H1 (cell line): ENCODE measurements at regions of chr1 and their contacts with region 1.

Region 1: GRCh38 chr1:94025383-94026340 is 95.3 kb downstream of the ABCA4 start:
- DNase-seq: no peak
- H3K4me3 ChIP-seq: no peak overlapping the region
- H3K27ac ChIP-seq: no peak overlapping the region
- H3K4me1 ChIP-seq: peaks cover 0 to 6% (median 2%) of the 10 kb centered on the region in 4 experiments; a peak in 3 of 7 replicates
- H3K27me3 ChIP-seq: no peaks in the 10 kb centered on the region; a peak in 1 of 7 replicates
- CTCF ChIP-seq: peak in 2 of 3 experiments; percentile 51 to 59; a peak in 3 of 4 replicates
- EP300 ChIP-seq: no peak
- POLR2A ChIP-seq: no peak
- RAD21 ChIP-seq: peak; percentile 63 to 66

Region 2: DNA sequence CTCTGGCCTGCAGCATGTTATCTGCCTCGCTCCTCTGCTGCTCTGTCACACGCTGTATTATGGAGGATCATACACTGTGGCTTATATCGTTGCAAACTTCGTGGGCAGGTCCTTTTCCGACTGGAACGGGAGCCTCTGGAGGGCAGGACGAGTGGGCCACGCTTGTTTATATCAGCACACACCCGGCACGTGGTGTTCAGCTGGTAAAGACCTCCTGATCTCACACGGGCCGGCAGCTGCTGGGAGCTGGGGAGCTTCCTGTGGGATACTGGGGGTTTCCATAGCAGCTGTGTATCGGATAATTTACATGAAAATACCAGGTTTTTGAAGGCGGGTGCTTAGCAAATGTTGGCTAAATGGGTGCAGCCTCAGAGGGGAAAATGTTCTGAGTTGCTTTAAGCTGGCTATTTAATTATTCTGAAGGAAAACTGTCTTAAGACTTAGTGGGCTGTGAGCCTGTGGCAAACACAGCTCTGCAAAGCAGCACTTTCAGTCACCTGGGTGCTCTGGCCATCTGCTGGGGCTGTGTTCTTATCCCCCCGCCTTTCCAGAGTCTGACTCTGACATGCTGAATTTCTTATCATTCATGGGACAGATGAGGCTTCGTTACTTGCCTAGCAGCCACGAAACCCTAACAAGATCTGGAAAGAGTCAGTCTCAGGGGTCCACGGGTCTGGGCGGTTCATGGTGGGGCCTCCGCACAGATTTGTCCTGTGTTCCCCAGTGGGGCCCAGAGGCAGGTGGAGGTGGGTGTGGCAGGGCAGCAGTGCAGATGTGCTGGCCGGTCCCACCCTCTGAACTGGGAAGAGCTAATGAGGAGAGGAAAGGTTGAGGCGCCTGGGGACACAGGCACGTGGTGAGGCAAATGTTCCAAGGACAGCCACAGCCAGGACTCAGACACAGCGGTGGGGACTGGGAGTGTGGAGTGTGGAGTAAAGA is 12.7 kb before region 1 on chr1:
- CTCF ChIA-PET with region 1: interaction called, 47 read pairs
- POLR2A ChIA-PET with region 1: interaction called, 4 read pairs
- DNase-seq: peak in 1 of 2 experiments; percentile 62
- H3K4me3 ChIP-seq: peak overlapping the region in 1 of 4 experiments; percentile 24; a peak in 1 of 8 replicates
- H3K27ac ChIP-seq: no peak overlapping the region
- H3K4me1 ChIP-seq: peaks cover 6 to 24% (median 15%) of the 10 kb centered on the region in 4 experiments
- H3K27me3 ChIP-seq: peaks cover 0 to 28% (median 14%) of the 10 kb centered on the region in 4 experiments; a peak in 4 of 7 replicates
- CTCF ChIP-seq: no peak
- EP300 ChIP-seq: no peak
- POLR2A ChIP-seq: no peak
- RAD21 ChIP-seq: no peak

Region 3: DNA sequence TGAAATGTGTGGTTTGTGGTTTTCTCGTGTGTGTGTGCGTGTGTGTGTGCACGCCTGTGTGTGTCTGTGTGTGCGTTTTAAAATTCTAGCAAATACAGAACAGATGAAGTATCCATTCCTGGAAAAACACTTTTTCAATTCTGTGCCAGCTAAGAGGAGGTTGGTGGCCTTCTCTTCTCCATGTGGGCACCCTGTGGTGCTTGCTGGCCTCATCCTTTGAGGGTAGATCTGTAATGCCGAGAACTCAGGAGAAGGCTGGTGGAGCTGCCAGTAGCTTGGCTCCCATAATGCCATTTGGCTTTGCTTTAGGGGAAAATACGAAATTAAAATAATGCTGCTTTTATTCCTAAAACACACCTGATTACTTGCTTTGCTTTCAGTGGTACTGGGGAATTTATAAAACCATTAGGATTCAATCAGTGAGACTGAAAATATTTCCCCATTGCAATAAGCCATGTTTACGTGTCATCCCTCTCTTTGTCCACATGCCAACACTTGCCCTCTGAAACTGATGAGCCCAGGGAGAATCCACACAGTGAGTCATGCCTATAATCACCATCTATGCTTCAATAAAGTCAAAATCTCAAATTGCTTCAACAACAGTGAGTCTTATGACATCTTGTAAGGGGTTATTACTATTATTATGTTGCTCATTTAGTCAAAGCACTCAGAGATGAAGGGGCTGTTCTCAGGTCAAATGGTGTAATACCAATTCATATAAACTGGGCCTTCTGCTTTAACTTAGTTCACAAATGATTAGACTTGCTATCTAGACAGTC is 56.1 kb after region 1 on chr1:
- CTCF ChIA-PET with region 1: interaction called, 13 read pairs
- POLR2A ChIA-PET with region 1: no interaction called
- DNase-seq: no peak
- H3K4me3 ChIP-seq: no peak overlapping the region
- H3K27ac ChIP-seq: no peak overlapping the region
- H3K4me1 ChIP-seq: peaks cover 0 to 3% (median under 1%) of the 10 kb centered on the region in 4 experiments; a peak in 1 of 7 replicates
- H3K27me3 ChIP-seq: no peaks in the 10 kb centered on the region; a peak in 3 of 7 replicates
- CTCF ChIP-seq: no peak
- EP300 ChIP-seq: no peak
- POLR2A ChIP-seq: no peak
- RAD21 ChIP-seq: no peak